ENCODE measurements at regions of chr4 and their contacts with region 1.

Region 1: GRCh38 chr4:87938746-87939145 is 36.8 kb upstream of the SPP1 start:
- DNase-seq: no peak
- H3K4me3 ChIP-seq: no peak overlapping the region
- H3K27ac ChIP-seq: no peak overlapping the region
- H3K4me1 ChIP-seq: no peaks in the 10 kb centered on the region
- CTCF ChIP-seq: no peak

Region 2: GRCh38 chr4:87882321-87882720 is 56.4 kb before region 1 on chr4:
- CTCF ChIA-PET with region 1: no interaction called
- POLR2A ChIA-PET with region 1: no interaction called
- intact Hi-C with region 1: no loop called
- DNase-seq: no peak
- H3K4me3 ChIP-seq: no peak overlapping the region
- H3K27ac ChIP-seq: no peak overlapping the region
- H3K4me1 ChIP-seq: peaks cover 20% of the 10 kb centered on the region
- CTCF ChIP-seq: no peak

Region 3: DNA sequence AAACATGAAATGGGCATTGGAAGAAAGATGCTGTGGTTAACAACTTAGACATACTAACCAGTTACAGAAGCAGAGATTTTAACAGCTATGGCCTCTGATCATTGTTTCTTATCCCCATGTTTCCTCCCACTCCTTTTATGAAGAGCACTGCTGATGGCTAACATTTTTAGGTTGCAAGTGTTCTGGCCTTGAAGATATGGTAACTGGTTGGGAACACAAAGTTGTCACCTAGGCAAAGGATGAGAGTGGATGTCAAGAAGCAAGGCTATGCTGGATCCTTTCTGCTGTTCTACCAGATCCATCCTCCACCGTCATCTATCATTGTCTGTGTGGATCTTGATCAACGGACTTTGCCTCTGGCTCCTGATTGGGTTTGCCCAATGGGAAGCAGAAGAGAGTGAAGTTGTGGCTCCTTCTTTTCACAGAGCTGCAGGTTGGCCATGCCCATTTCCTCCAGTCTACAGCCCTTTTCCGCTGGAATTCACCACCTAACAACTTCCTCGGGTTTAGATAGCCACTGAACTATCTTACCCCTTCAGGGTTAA is 12.1 kb before region 1 on chr4:
- CTCF ChIA-PET with region 1: no interaction called
- POLR2A ChIA-PET with region 1: interaction called, 3 read pairs
- intact Hi-C with region 1: loop called (anchors 1 kb)
- DNase-seq: no peak
- H3K4me3 ChIP-seq: no peak overlapping the region
- H3K27ac ChIP-seq: no peak overlapping the region
- H3K4me1 ChIP-seq: no peaks in the 10 kb centered on the region
- CTCF ChIP-seq: no peak